Esophagus squamous epithelium (tissue), 5 donors: ENCODE measurements at regions of chr5 and their contacts with region 1.

Region 1: GRCh38 chr5:36866174-36866573 is 10.4 kb upstream of the NIPBL start:
- DNase-seq: no peak
- H3K4me3 ChIP-seq: no peak overlapping the region
- H3K27ac ChIP-seq: no peak overlapping the region
- H3K4me1 ChIP-seq: peaks cover 0 to 11% (median 0%) of the 10 kb centered on the region in 3 donors
- H3K27me3 ChIP-seq: no peaks in the 10 kb centered on the region
- CTCF ChIP-seq: peak in 1 of 6 experiments; percentile 4
- POLR2A ChIP-seq: no peak

Region 2: GRCh38 chr5:36744773-36745589 is 121.2 kb before region 1 on chr5:
- intact Hi-C with region 1: loop called (anchors 5 kb)
- DNase-seq: no peak
- H3K4me3 ChIP-seq: peak overlapping the region; percentile 54 to 74 (median 64)
- H3K27ac ChIP-seq: peak overlapping the region; percentile 84 to 95 (median 89)
- H3K4me1 ChIP-seq: peaks cover 13 to 40% (median 15%) of the 10 kb centered on the region in 3 donors
- H3K27me3 ChIP-seq: peaks cover 0 to 3% (median 0%) of the 10 kb centered on the region in 4 donors
- CTCF ChIP-seq: peak in 1 of 6 experiments; percentile 4
- POLR2A ChIP-seq: no peak